ENCODE measurements at regions of chr19 and their contacts with region 1.

Region 1: DNA sequence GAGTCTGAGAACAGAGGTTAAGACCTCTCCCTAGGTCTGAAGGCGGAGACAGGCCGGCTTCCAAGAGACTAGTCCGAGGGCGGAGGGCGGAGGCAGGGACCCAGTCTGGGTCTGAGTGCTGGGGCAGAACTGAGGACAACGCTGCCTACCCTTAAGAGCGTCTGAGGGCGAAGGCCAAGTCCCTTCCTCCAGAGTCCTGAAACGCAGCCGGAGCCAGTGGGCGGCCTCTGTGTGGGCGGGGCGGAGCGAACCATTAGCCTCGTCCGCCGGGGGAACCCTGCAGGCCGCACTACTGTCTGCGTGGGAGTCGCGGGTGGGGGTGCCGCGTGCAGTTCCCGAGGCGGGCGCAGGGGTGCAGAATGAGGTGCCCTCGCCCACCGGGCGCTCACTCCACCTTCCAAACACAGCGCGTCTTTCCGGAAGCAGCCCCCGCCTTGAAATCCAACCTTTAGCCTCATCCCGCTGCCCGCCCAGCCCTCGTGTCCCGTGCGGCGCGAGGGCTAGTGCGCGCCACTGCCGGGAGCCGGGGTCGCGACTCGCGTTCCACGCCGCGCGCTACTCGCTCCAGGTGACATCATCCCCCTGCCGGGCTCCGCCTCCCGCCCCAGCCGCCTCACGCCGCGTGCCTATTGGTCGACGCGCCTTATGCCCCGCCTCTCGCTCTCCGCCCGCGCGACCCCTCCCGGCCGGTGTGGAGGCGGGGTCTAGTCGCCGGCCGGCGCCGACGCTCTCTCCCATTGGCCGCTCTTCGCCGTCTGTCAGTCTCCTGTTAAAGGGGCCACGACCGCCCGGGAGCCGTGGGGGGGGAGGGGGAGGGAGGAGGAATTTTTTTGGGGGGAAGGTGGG is at the start of gene C19orf73:
- DNase-seq: peak; percentile 84
- ATAC-seq: peak; percentile 81
- H3K4me3 ChIP-seq: peak within 1 kb of the TSS; percentile 59 to 66
- H3K27ac ChIP-seq: peak within 1 kb of the TSS; percentile 97
- H3K4me1 ChIP-seq: peaks cover 18 to 37% of the 10 kb centered on the region in 2 experiments
- H3K27me3 ChIP-seq: no peaks in the 10 kb centered on the region
- CTCF ChIP-seq: no peak
- POLR2A ChIP-seq: peak; percentile 87
- RAD21 ChIP-seq: no peak
- total RNA-seq, gene C19orf73: 2.2 TPM

Region 2: GRCh38 chr19:49224856-49225255 is 106.1 kb after region 1 on chr19:
- CTCF ChIA-PET with region 1: interaction called, 11 read pairs
- POLR2A ChIA-PET with region 1: no interaction called
- RAD21 ChIA-PET with region 1: no interaction called
- intact Hi-C with region 1: no loop called
- DNase-seq: peak; percentile 61
- ATAC-seq: peak; percentile 87
- H3K4me3 ChIP-seq: no peak overlapping the region
- H3K27ac ChIP-seq: no peak overlapping the region
- H3K4me1 ChIP-seq: peaks cover 7 to 20% of the 10 kb centered on the region in 2 experiments; a peak in 3 of 4 replicates
- H3K27me3 ChIP-seq: no peaks in the 10 kb centered on the region
- CTCF ChIP-seq: peak; percentile 61 to 82 (median 67)
- POLR2A ChIP-seq: no peak
- RAD21 ChIP-seq: peak; percentile 93

Measured in HCT116 (cell line).